AG04450 (cell line): ENCODE measurements at regions of chr10 and their contacts with region 1.

Region 1: DNA sequence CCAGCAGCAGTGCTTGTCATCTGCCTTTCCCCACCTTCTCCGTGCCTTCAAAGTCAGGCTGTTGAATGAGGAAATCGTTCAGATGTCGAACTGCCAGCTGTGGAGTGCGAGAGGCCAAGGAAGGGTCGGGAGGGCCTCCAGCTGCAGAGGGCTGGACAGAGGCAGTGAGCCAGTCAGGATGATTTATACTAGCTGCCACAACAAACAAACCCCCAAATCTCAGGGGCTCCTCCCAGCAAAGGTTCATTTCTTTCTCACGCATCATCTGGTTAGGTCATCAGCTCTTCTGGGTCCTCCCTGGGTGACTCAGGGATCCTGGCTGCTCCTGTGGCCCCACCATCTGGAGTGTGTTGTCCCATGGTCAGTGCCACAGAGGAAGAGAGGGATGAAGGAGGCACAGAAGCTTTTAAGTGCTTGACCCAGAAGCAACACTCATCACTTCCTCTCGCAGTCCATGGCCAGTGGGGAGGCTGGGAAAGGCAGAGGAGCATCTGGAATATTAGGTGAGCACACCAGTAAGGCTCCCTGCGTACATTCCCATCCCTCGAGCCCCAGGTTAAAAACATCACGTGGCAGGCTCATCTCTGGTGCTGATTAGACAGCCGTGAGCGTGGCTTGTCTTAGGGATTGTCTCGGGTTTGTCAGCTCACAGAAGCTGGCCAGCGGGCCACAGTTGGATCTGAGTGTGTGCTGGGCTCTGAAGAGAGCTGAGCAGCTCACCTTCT is 140.7 kb downstream of the RGS10 start:
- DNase-seq: peak; percentile 95
- H3K4me3 ChIP-seq: no peak overlapping the region
- H3K27ac ChIP-seq: peak overlapping the region; percentile 95
- H3K27me3 ChIP-seq: no peaks in the 10 kb centered on the region
- CTCF ChIP-seq: no peak

Region 2: DNA sequence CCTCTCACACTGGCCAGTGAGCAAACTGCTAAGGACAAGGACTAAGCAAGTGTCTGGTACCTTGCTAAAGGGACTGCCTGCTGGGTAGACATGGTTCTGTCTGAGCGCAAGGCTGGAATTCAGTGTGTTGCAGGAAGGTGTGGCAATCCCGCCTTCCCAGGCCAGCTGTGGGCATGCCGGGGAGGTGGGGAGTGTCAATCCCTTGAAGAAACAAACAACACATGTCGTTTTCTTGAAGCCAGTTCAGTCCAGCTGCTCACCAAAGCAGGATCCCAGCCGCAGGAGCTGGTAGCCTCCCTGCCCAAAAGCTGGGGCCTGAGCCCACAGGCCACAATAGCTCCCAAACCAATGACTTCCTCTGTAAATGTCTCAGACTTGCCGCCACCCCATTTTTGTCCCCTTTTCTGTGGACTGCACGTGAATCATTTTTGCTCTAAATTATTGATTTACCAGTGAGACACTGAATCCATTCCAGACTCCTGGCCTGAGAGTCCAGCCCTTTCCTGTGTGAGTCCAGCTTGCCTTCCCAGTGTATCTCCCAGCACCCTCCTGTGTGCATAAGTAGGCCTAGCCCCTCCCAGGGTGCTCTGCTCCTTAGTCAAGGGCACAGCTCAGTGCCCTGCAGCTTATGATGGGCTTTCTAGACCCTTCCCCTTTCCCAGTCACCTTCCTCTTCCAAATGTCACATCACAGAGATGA is 26.1 kb before region 1 on chr10:
- CTCF ChIA-PET with region 1: no interaction called
- POLR2A ChIA-PET with region 1: interaction called, 11 read pairs
- DNase-seq: peak; percentile 48
- H3K4me3 ChIP-seq: no peak overlapping the region
- H3K27ac ChIP-seq: peak overlapping the region; percentile 34
- H3K27me3 ChIP-seq: no peaks in the 10 kb centered on the region
- CTCF ChIP-seq: no peak

Region 3: GRCh38 chr10:119414081-119414611 is 12.3 kb after region 1 on chr10:
- CTCF ChIA-PET with region 1: interaction called, 4 read pairs
- POLR2A ChIA-PET with region 1: interaction called, 41 read pairs
- DNase-seq: peak; percentile 96
- H3K4me3 ChIP-seq: no peak overlapping the region
- H3K27ac ChIP-seq: peak overlapping the region; percentile 94
- H3K27me3 ChIP-seq: no peaks in the 10 kb centered on the region
- CTCF ChIP-seq: no peak

Region 4: DNA sequence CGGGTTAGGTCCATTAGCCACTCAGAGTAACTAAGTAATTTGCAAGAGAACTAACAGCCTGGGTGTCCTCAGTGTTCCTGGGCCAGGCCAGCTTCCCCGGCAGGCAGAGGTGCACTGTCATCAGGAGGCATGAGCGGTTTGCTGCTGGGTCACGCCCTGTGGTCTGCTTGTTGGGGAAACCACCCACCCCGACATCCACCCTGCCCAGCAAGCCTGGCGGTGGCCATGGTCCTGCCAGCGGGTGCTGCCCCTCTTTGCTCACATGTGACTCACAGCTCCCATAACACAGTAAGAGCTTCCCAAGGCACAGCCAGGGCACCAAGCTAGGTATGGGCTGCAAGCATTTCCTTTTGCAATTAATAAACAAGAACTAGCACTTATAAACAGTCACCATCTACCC is 64.8 kb after region 1 on chr10:
- CTCF ChIA-PET with region 1: no interaction called
- POLR2A ChIA-PET with region 1: no interaction called
- DNase-seq: no peak
- H3K4me3 ChIP-seq: no peak overlapping the region
- H3K27ac ChIP-seq: no peak overlapping the region
- H3K27me3 ChIP-seq: peaks cover 29% of the 10 kb centered on the region
- CTCF ChIP-seq: no peak